Transverse colon (tissue), 4 donors: ENCODE measurements at regions of chr14 and their contacts with region 1.

Region 1: GRCh38 chr14:52131640-52132320 is 62.9 kb upstream of the NID2 start:
- DNase-seq: peak; percentile 84
- H3K4me3 ChIP-seq: no peak overlapping the region
- H3K27ac ChIP-seq: peak overlapping the region in 1 of 4 donors; percentile 14
- H3K4me1 ChIP-seq: peaks cover 0 to 14% (median 6%) of the 10 kb centered on the region in 4 donors
- H3K27me3 ChIP-seq: no peaks in the 10 kb centered on the region
- CTCF ChIP-seq: peak; percentile 64 to 82 (median 69)
- EP300 ChIP-seq: no peak
- POLR2A ChIP-seq: no peak

Region 2: GRCh38 chr14:51996148-51996746 is 135.5 kb before region 1 on chr14:
- in situ Hi-C with region 1: loop called in 3 of 4 experiments (anchors 5 to 10 kb)
- intact Hi-C with region 1: no loop called
- DNase-seq: no peak
- H3K4me3 ChIP-seq: no peak overlapping the region
- H3K27ac ChIP-seq: no peak overlapping the region
- H3K4me1 ChIP-seq: peaks cover 0 to 8% (median 0%) of the 10 kb centered on the region in 4 donors
- H3K27me3 ChIP-seq: no peaks in the 10 kb centered on the region
- CTCF ChIP-seq: peak; percentile 77 to 85 (median 79)
- EP300 ChIP-seq: no peak
- POLR2A ChIP-seq: no peak

Region 3: GRCh38 chr14:52351233-52352060 is 219.7 kb after region 1 on chr14:
- in situ Hi-C with region 1: no loop called
- intact Hi-C with region 1: no loop called
- DNase-seq: no peak
- H3K4me3 ChIP-seq: no peak overlapping the region
- H3K27ac ChIP-seq: peak overlapping the region; percentile 61 to 83 (median 72)
- H3K4me1 ChIP-seq: peaks cover 25 to 64% (median 43%) of the 10 kb centered on the region in 4 donors
- H3K27me3 ChIP-seq: no peaks in the 10 kb centered on the region
- CTCF ChIP-seq: no peak
- EP300 ChIP-seq: no peak
- POLR2A ChIP-seq: no peak